ENCODE measurements at regions of chr19 and their contacts with region 1.

Region 1: DNA sequence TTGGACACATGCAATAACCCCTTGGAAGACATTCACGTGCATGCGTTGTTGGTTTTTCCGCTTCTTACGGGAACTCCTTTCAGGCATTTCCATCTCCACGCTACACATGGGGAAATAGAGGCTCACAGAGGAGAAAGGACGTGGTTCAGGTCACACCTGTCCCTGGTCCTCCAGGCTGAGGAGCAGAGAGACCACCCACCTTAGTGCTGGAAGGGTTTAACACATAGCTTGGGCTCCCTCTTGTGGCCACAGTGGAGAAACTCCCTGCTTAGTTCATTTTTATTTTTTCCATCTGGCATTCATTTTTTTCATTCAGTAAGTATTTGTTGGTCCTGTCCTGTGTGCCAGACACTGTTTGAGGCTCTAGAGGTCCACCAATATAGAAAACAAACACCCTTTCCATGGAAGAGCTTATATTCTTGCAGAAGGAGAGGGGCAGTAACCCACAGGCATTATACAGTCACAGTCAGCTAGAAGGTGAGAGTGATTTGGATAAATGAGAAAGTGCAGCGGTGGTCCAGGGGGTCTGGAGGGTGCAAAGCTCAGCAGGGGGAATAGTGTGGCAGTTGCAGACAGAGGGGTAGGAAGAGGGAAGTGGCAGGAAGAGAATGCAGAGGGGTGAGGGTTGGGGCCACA is 24.2 kb upstream of the TTYH1 start:
- DNase-seq: peak; percentile 83
- ATAC-seq: peak; percentile 28
- H3K4me3 Mint-ChIP-seq: no peak overlapping the region
- H3K27ac Mint-ChIP-seq: no peak overlapping the region
- H3K4me1 Mint-ChIP-seq: peaks cover 40% of the 10 kb centered on the region
- H3K27me3 Mint-ChIP-seq: peaks cover 4% of the 10 kb centered on the region

Region 2: GRCh38 chr19:54266133-54266532 is 124.9 kb before region 1 on chr19:
- CTCF ChIA-PET with region 1: interaction called, 30 read pairs
- POLR2A ChIA-PET with region 1: no interaction called
- DNase-seq: peak; percentile 84
- ATAC-seq: peak; percentile 85
- H3K4me3 Mint-ChIP-seq: no peak overlapping the region
- H3K27ac Mint-ChIP-seq: no peak overlapping the region
- H3K4me1 Mint-ChIP-seq: no peaks in the 10 kb centered on the region
- H3K27me3 Mint-ChIP-seq: peaks cover 21% of the 10 kb centered on the region

Region 3: DNA sequence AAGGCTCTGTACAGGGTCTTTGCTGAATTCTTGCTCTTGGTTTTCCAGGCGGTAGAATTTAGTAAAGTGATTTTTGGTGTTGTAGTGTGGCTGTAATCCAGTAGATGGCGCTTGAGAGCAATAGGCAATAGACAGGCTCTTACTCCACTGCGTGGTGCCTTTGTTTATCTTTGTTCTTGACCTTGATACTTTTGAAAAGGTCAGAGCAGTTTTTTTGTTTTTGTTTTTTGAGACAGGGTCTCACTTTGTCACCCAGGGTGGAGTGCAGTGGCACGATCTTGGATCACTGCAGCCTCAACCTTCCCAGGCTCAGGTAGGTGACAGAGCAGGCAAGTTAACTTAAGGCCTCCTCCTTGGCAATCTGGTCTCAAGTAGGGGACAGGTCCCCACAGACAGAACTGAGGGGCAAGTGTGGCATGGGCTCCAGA is 65.9 kb before region 1 on chr19:
- CTCF ChIA-PET with region 1: interaction called, 184 read pairs
- POLR2A ChIA-PET with region 1: no interaction called
- DNase-seq: peak; percentile 72
- ATAC-seq: peak; percentile 81
- H3K4me3 Mint-ChIP-seq: no peak overlapping the region
- H3K27ac Mint-ChIP-seq: no peak overlapping the region
- H3K4me1 Mint-ChIP-seq: peaks cover 29% of the 10 kb centered on the region
- H3K27me3 Mint-ChIP-seq: peaks cover 17% of the 10 kb centered on the region

Region 4: DNA sequence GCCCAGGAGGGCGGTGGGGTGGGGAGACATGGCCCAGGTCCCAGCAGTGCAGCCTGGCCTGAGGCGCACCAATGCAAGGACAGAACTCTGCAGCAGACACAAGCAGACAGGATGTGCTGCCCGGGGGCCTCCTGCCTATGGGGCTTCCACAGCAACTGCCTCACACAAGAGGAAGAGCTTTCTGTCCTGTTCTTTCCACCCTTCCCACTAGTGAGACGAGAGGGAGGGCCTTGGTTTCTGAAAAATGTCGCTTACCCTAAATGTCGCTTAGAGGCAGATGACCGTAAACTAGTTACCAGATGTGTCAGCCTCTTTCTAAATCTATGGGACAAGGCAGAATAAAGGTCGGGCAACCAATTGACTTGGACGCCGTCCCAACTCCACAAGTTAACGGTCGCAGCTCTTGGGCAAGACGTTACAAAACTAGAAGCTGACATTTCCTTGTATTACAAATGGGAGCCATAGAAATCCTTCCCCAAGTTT is 26.2 kb before region 1 on chr19 and contains the start of gene LAIR1:
- CTCF ChIA-PET with region 1: interaction called, 67 read pairs
- POLR2A ChIA-PET with region 1: interaction called, 16 read pairs
- DNase-seq: peak; percentile 78
- ATAC-seq: peak; percentile 89
- H3K4me3 Mint-ChIP-seq: peak within 1 kb of the TSS; percentile 98
- H3K27ac Mint-ChIP-seq: peak within 1 kb of the TSS; percentile 96
- H3K4me1 Mint-ChIP-seq: peaks cover 67% of the 10 kb centered on the region
- H3K27me3 Mint-ChIP-seq: peaks cover 4% of the 10 kb centered on the region
- total RNA-seq, gene LAIR1: 92.8 to 97.6 TPM

Region 5: GRCh38 chr19:54379187-54379678 is 11.8 kb before region 1 on chr19:
- CTCF ChIA-PET with region 1: interaction called, 40 read pairs
- POLR2A ChIA-PET with region 1: interaction called, 23 read pairs
- DNase-seq: no peak
- ATAC-seq: no peak
- H3K4me3 Mint-ChIP-seq: no peak overlapping the region
- H3K27ac Mint-ChIP-seq: peak overlapping the region; percentile 40
- H3K4me1 Mint-ChIP-seq: peaks cover 63% of the 10 kb centered on the region
- H3K27me3 Mint-ChIP-seq: peaks cover 17% of the 10 kb centered on the region

Region 6: GRCh38 chr19:54439174-54439853 is 48.3 kb after region 1 on chr19:
- CTCF ChIA-PET with region 1: interaction called, 10 read pairs
- POLR2A ChIA-PET with region 1: no interaction called
- DNase-seq: peak; percentile 44
- ATAC-seq: peak; percentile 67
- H3K4me3 Mint-ChIP-seq: no peak overlapping the region
- H3K27ac Mint-ChIP-seq: no peak overlapping the region
- H3K4me1 Mint-ChIP-seq: peaks cover 9% of the 10 kb centered on the region
- H3K27me3 Mint-ChIP-seq: no peaks in the 10 kb centered on the region

Region 7: DNA sequence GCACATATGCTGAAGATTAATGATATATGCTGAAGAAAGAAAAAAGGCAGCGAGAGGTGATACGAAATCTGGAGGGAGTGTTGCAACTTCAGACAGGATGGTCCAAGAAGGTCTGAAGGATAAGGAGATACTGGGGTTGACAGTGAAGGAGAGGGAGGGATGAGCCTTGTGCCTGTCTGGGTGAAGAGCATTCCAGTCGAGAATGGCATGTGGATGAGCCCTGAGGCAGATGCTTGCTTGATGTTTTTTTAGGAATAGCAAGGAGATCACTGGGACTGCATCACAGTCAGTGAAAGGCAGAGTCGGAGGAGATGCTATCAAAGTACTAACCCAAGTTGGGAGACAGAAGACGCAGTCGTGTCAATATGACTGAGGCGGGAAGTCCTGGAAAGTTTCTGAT is 98.3 kb after region 1 on chr19:
- CTCF ChIA-PET with region 1: no interaction called
- POLR2A ChIA-PET with region 1: no interaction called
- DNase-seq: no peak
- ATAC-seq: no peak
- H3K4me3 Mint-ChIP-seq: no peak overlapping the region
- H3K27ac Mint-ChIP-seq: no peak overlapping the region
- H3K4me1 Mint-ChIP-seq: no peaks in the 10 kb centered on the region
- H3K27me3 Mint-ChIP-seq: peaks cover 33% of the 10 kb centered on the region

Region 8: DNA sequence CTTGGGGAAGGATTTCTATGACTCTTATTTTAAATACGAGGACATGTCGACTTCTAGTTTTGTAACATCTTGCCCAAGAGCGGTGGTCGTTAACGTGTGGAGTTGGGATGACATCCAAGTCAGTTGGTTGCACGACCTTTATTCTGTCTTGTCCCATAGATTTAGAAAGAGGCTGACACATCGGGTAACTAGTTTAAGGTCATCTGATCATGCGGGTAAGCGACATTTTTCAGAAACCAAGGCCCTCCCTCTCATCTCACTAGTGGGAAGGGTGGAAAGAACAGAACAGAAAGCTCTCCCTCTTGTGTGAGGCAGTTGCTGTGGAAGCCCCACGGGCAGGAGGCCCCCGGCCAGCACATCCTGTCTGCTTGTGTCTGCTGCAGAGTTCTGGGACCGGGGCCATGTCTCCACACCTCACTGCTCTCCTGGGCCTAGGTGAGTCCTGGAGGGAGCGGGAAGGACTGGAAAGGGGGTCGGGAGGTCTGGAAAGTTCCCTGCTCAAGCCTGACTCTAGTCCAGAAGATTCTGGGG is 111.5 kb after region 1 on chr19 and contains the start of gene LAIR2:
- CTCF ChIA-PET with region 1: no interaction called
- POLR2A ChIA-PET with region 1: no interaction called
- DNase-seq: peak; percentile 42
- ATAC-seq: peak; percentile 67
- H3K4me3 Mint-ChIP-seq: peak within 1 kb of the TSS; percentile 61
- H3K27ac Mint-ChIP-seq: peak within 1 kb of the TSS; percentile 52
- H3K4me1 Mint-ChIP-seq: peaks cover 45% of the 10 kb centered on the region
- H3K27me3 Mint-ChIP-seq: peaks cover 16% of the 10 kb centered on the region
- total RNA-seq, gene LAIR2: 1.4 to 1.6 TPM

Measured in activated CD8-positive, alpha-beta T cell treated with anti-CD3 and anti-CD28 coated beads, Interleukin-2, amount 10 ng/mL, durations not matched to agents 7 days and 5 days (primary cell).